ENCODE measurements at regions of chr4 and their contacts with region 1.

Region 1: GRCh38 chr4:38965866-38966265 is 66.3 kb downstream of the TMEM156 start:
- DNase-seq: no peak
- H3K4me3 ChIP-seq: no peak overlapping the region
- CTCF ChIP-seq: no peak

Region 2: GRCh38 chr4:38948551-38948950 is 17.3 kb before region 1 on chr4:
- CTCF ChIA-PET with region 1: interaction called, 12 read pairs
- POLR2A ChIA-PET with region 1: no interaction called
- DNase-seq: peak; percentile 78
- H3K4me3 ChIP-seq: no peak overlapping the region
- CTCF ChIP-seq: no peak